ENCODE measurements at regions of chr18 and their contacts with region 1.

Region 1: DNA sequence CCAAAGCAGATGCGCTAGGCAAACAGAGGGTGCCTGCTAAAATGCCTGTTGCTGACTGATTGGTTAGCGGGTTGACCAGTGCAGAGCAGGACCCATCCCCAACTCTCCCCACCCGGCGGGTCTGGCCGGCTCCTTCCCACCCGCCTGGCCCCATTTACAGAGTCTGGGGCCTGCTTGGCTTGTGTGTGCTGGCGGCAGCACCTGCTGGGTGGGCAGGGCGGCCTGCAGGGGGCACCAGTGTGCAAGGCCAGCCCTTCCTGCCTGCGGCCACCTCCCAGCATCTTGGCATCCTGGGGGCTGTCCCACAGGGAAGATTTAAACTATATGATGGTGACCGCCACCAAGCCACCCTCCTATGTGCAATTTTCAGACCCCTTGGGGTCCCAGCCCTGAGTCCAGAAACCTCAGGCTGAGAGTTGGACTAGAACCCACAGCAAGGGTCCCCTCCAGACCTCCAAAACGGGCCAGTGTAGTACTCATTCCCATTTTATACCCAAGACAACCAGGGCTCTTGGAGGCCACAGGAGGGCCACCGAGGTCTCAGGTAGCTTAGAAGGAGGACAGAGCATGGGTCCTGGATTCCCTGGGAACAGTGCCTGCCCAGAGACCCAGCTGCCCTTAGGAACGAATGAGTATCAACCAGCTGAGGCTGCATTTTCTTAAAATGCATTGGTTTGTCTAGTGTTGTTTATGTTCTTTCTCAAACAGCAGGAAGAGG is 173.6 kb downstream of the SMAD7 start:
- DNase-seq: peak; percentile 63
- ATAC-seq: peak; percentile 85
- H3K4me3 Mint-ChIP-seq: no peak overlapping the region
- H3K27ac Mint-ChIP-seq: no peak overlapping the region
- H3K4me1 Mint-ChIP-seq: peaks cover 18% of the 10 kb centered on the region
- H3K27me3 Mint-ChIP-seq: no peaks in the 10 kb centered on the region
- CTCF ChIP-seq: peak; percentile 66

Region 2: GRCh38 chr18:48913201-48913600 is 136.0 kb after region 1 on chr18:
- CTCF ChIA-PET with region 1: interaction called, 6 read pairs
- POLR2A ChIA-PET with region 1: interaction called, 3 read pairs
- intact Hi-C with region 1: loop called (anchors 1 kb)
- DNase-seq: no peak
- ATAC-seq: peak; percentile 79
- H3K4me3 Mint-ChIP-seq: no peak overlapping the region
- H3K27ac Mint-ChIP-seq: no peak overlapping the region
- H3K4me1 Mint-ChIP-seq: peaks cover 10% of the 10 kb centered on the region
- H3K27me3 Mint-ChIP-seq: no peaks in the 10 kb centered on the region
- CTCF ChIP-seq: no peak

Region 3: DNA sequence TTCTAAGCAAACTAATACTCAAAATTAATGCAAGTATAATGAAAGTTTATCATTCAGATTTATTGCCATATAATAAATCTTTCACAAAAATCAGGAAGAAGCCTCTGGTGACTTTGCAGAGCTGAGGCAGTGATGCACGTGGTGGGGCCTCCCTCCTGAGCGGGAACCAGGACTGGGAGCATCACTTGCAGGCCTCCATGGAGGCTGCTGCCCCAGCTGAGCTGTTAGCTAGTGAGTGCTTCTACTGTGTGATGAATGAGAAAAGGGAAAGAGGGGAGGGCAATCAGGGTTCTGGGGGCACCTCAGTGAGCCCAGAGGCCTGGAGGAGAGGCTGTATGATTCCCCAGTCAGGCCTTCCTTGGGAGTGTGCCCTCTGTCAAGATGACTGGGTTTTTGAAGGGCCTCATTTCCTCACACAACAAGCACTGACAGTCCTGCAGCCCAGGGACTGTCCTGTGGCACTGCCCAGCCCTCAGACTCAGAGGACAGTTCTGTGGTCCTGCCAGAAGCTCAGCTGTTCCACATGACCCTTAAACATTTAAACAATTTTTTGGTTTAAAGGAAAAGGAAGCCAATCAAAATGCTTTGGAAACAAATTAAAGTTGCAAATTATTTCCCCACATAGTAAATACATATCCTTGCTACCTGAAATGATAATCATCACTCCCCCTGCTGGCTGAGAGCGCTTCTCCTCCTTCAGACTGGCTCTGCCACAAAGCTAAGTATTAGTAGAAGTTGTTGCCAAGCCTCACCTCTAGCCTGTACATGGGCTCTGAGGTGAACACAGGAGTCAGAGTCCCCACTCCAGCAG is 264.5 kb after region 1 on chr18:
- CTCF ChIA-PET with region 1: interaction called, 29 read pairs
- POLR2A ChIA-PET with region 1: no interaction called
- intact Hi-C with region 1: loop called (anchors 1 kb)
- DNase-seq: no peak
- ATAC-seq: no peak
- H3K4me3 Mint-ChIP-seq: no peak overlapping the region
- H3K27ac Mint-ChIP-seq: no peak overlapping the region
- H3K4me1 Mint-ChIP-seq: peaks cover 3% of the 10 kb centered on the region
- H3K27me3 Mint-ChIP-seq: no peaks in the 10 kb centered on the region
- CTCF ChIP-seq: no peak

Region 4: DNA sequence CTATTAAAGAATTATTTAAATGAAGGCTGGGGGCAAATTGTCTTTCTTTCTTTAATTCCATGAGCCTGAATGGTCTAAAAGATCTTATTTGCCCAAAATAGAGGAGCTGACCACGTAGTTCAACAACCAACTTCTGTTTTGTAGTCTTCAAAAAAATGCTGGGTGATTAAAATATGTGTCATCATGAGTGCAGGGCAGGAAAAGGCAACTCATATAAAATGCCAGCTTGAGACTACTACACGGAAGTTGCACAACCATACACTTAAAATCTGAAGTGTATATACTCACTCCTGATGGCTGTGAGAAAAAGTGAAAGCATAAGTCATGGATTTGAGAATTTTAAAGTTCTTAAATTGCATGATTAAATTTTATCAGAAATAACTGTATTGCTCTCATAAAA is 472.3 kb after region 1 on chr18:
- CTCF ChIA-PET with region 1: no interaction called
- POLR2A ChIA-PET with region 1: no interaction called
- intact Hi-C with region 1: loop called (anchors 10 kb)
- DNase-seq: no peak
- ATAC-seq: no peak
- H3K4me3 Mint-ChIP-seq: no peak overlapping the region
- H3K27ac Mint-ChIP-seq: no peak overlapping the region
- H3K4me1 Mint-ChIP-seq: no peaks in the 10 kb centered on the region
- H3K27me3 Mint-ChIP-seq: no peaks in the 10 kb centered on the region
- CTCF ChIP-seq: no peak

Region 5: GRCh38 chr18:49459404-49460171 is 682.4 kb after region 1 on chr18:
- CTCF ChIA-PET with region 1: no interaction called
- POLR2A ChIA-PET with region 1: no interaction called
- intact Hi-C with region 1: loop called (anchors 10 kb)
- DNase-seq: no peak
- ATAC-seq: peak; percentile 23
- H3K4me3 Mint-ChIP-seq: peak overlapping the region; percentile 88
- H3K27ac Mint-ChIP-seq: peak overlapping the region; percentile 77
- H3K4me1 Mint-ChIP-seq: peaks cover 45% of the 10 kb centered on the region
- H3K27me3 Mint-ChIP-seq: no peaks in the 10 kb centered on the region
- CTCF ChIP-seq: no peak